CD4-positive, alpha-beta memory T cell (primary cell): ENCODE measurements at regions of chr22 and their contacts with region 1.

Region 1: DNA sequence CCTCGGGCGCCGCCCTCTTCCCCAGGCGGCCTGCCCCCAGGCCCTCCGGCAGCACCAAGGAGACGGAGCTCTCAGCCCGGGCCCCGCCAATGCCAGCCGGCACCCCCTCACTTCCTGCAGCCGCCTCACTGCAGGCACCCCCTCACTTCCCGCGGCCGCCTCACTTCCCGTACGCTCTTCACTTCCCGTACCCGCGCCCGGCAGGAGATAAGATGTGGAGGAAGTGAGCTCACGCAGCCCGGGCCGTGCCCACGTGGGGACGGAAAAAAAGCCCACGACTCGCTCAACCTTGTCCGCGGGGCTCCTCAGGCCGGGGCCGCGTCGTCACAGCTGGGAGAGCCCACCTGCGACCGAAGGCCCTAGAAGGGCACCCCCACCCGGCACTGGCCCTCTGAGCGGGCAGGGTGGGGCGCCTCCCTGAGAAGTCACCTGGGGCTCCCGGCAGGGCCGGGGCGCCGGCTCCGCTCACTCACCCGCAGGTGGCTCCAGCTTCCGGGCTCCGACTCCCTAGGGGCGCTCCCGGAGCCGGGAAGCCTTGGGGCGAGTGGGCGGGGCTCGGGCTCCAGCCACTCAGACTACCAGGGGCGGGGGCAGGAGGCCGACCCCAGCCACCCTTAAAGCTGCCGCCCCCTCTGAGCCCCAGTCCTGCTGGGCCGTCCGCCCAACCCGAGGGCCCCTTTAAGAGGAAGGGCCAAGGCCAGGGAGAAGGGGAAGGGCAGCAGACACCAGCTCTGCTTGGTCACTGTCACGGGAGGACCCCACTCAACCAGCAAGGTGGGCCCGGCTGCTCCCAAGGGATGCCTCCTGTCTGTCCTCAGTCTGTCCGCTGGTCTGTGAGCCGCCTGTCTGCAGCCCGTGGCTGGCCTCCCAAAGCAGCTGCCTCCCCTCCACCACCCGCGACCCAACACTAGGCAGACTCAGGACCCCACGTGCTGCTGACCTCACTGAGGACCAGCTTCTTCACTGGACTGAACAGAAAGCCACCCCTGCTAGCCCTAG is 31.4 kb downstream of the PISD start:
- DNase-seq: peak; percentile 88 to 94 (median 89)
- H3K4me3 ChIP-seq: peak overlapping the region; percentile 29 to 69
- H3K4me3 Mint-ChIP-seq: peak overlapping the region; percentile 86 to 89 (median 88)
- H3K27ac ChIP-seq: peak overlapping the region; percentile 86
- H3K27ac Mint-ChIP-seq: peak overlapping the region; percentile 88 to 96 (median 94)
- H3K4me1 ChIP-seq: peaks cover 56% of the 10 kb centered on the region
- H3K4me1 Mint-ChIP-seq: peaks cover 20 to 66% (median 39%) of the 10 kb centered on the region in 4 donors
- H3K27me3 ChIP-seq: no peaks in the 10 kb centered on the region
- H3K27me3 Mint-ChIP-seq: no peaks in the 10 kb centered on the region

Region 2: GRCh38 chr22:30763815-30764686 is 866.6 kb before region 1 on chr22:
- CTCF ChIA-PET with region 1: no interaction called
- POLR2A ChIA-PET with region 1: no interaction called
- intact Hi-C with region 1: loop called (anchors 10 kb)
- DNase-seq: peak; percentile 52 to 67 (median 57)
- H3K4me3 ChIP-seq: no peak overlapping the region
- H3K4me3 Mint-ChIP-seq: no peak overlapping the region
- H3K27ac ChIP-seq: no peak overlapping the region
- H3K27ac Mint-ChIP-seq: no peak overlapping the region
- H3K4me1 ChIP-seq: no peaks in the 10 kb centered on the region
- H3K4me1 Mint-ChIP-seq: no peaks in the 10 kb centered on the region
- H3K27me3 ChIP-seq: no peaks in the 10 kb centered on the region
- H3K27me3 Mint-ChIP-seq: no peaks in the 10 kb centered on the region

Region 3: GRCh38 chr22:31218565-31219262 is 411.9 kb before region 1 on chr22:
- CTCF ChIA-PET with region 1: no interaction called
- POLR2A ChIA-PET with region 1: no interaction called
- intact Hi-C with region 1: no loop called
- DNase-seq: no peak
- H3K4me3 ChIP-seq: no peak overlapping the region
- H3K4me3 Mint-ChIP-seq: no peak overlapping the region
- H3K27ac ChIP-seq: no peak overlapping the region
- H3K27ac Mint-ChIP-seq: peak overlapping the region; percentile 59 to 88 (median 81)
- H3K4me1 ChIP-seq: peaks cover 47% of the 10 kb centered on the region
- H3K4me1 Mint-ChIP-seq: peaks cover 42 to 75% (median 53%) of the 10 kb centered on the region in 4 donors
- H3K27me3 ChIP-seq: no peaks in the 10 kb centered on the region
- H3K27me3 Mint-ChIP-seq: no peaks in the 10 kb centered on the region

Region 4: DNA sequence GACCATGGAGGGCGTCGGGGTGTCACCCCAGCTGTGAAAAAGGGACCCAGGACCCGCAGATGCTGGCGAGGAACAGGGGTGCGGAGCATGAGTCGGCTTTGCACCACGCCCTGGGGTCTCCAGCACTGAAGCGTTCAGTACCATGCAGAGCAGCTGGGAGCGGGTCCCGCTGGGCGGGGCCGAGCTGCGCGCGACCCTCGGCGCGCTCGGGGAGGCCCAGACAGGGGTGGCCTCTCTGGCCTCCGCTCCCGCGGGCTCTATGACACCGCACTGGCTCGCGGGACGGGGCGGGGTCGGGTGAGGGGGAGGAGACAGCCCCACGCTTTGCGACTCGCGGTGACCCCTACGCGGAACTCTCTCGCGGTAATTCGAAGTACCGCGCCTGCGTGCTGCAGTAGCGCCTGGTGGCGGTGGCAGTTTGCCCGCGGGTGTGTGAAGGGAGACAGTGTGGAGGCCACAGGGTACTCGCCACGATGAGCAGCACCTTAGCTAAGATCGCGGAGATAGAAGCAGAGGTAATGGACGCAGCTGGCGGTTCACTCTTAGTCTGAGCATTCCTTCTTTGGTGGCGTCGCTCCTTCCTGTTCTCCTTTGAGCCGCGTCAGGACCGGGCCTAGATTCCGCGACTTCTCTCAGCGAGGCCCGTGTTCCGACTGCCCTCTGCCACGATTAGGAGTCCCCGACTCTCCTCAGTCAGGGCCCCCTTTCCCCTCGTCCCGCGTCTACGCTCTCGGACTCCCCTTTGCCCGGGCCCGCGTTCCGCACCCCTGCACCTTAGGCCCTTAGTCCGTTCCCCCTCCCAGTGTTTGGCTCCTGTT is 231.2 kb before region 1 on chr22 and contains the start of gene DRG1:
- CTCF ChIA-PET with region 1: no interaction called
- POLR2A ChIA-PET with region 1: interaction called, 5 read pairs
- intact Hi-C with region 1: loop called (anchors 1 kb)
- DNase-seq: peak; percentile 93 to 95 (median 94)
- H3K4me3 ChIP-seq: peak within 1 kb of the TSS; percentile 87 to 97
- H3K4me3 Mint-ChIP-seq: peak within 1 kb of the TSS; percentile 95 to 97 (median 96)
- H3K27ac ChIP-seq: peak within 1 kb of the TSS; percentile 92
- H3K27ac Mint-ChIP-seq: peak within 1 kb of the TSS; percentile 90 to 98 (median 96)
- H3K4me1 ChIP-seq: peaks cover 26% of the 10 kb centered on the region
- H3K4me1 Mint-ChIP-seq: peaks cover 16 to 24% (median 20%) of the 10 kb centered on the region in 4 donors
- H3K27me3 ChIP-seq: no peaks in the 10 kb centered on the region
- H3K27me3 Mint-ChIP-seq: peaks cover under 1% of the 10 kb centered on the region in 2 donors
- total RNA-seq, gene DRG1: 80.3 to 82.5 TPM

Region 5: GRCh38 chr22:31451709-31452571 is 178.7 kb before region 1 on chr22:
- CTCF ChIA-PET with region 1: interaction called, 15 read pairs
- POLR2A ChIA-PET with region 1: interaction called, 10 read pairs
- intact Hi-C with region 1: loop called (anchors 1 kb)
- DNase-seq: peak in 4 of 5 donors; percentile 16 to 22 (median 18)
- H3K4me3 ChIP-seq: no peak overlapping the region
- H3K4me3 Mint-ChIP-seq: no peak overlapping the region
- H3K27ac ChIP-seq: no peak overlapping the region
- H3K27ac Mint-ChIP-seq: peak overlapping the region in 4 of 7 donors; percentile 1 to 49 (median 28)
- H3K4me1 ChIP-seq: no peaks in the 10 kb centered on the region
- H3K4me1 Mint-ChIP-seq: no peaks in the 10 kb centered on the region
- H3K27me3 ChIP-seq: no peaks in the 10 kb centered on the region
- H3K27me3 Mint-ChIP-seq: no peaks in the 10 kb centered on the region

Region 6: GRCh38 chr22:31496007-31496734 is 134.5 kb before region 1 on chr22 and contains the start of gene SFI1:
- CTCF ChIA-PET with region 1: no interaction called
- POLR2A ChIA-PET with region 1: interaction called, 7 read pairs
- intact Hi-C with region 1: loop called (anchors 1 kb)
- DNase-seq: peak; percentile 96 to 97 (median 96)
- H3K4me3 ChIP-seq: peak within 1 kb of the TSS; percentile 93 to 96
- H3K4me3 Mint-ChIP-seq: peak within 1 kb of the TSS; percentile 87 to 98 (median 91)
- H3K27ac ChIP-seq: peak within 1 kb of the TSS; percentile 89
- H3K27ac Mint-ChIP-seq: peak within 1 kb of the TSS; percentile 94 to 98 (median 97)
- H3K4me1 ChIP-seq: peaks cover 60% of the 10 kb centered on the region
- H3K4me1 Mint-ChIP-seq: peaks cover 23 to 63% (median 32%) of the 10 kb centered on the region in 4 donors
- H3K27me3 ChIP-seq: no peaks in the 10 kb centered on the region
- H3K27me3 Mint-ChIP-seq: no peaks in the 10 kb centered on the region
- total RNA-seq, gene SFI1: 323 to 333 TPM

Region 7: DNA sequence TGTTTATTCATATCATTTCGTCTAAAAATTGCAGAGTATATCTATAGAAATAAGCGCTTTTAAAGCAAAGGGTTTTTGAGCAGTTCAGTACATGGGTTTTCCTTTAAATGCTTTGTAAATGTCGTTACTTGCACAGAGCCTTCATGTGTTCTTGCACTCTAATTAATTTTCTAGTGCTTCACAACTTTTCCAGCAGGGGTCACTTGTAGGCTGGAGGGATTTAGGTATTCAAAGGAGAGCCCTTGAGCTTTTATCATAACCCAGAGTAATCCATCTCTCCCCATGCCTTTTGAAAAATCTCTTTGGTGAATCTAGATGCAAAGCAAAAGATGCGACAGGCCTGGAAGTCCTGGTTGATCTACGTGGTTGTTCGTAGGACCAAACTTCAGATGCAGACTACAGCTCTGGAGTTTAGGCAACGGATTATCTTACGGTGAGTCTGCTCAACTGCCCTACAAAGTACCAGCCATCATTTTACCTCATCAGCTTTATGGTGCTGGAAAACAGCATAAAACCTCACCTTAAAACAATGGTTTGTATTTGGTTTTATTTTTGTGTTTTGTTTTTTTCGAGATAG is 73.9 kb before region 1 on chr22:
- CTCF ChIA-PET with region 1: interaction called, 65 read pairs
- POLR2A ChIA-PET with region 1: interaction called, 4 read pairs
- intact Hi-C with region 1: loop called (anchors 2 kb)
- DNase-seq: peak in 4 of 5 donors; percentile 21 to 30 (median 23)
- H3K4me3 ChIP-seq: no peak overlapping the region
- H3K4me3 Mint-ChIP-seq: no peak overlapping the region
- H3K27ac ChIP-seq: no peak overlapping the region
- H3K27ac Mint-ChIP-seq: peak overlapping the region in 3 of 7 donors; percentile 71 to 80 (median 75)
- H3K4me1 ChIP-seq: peaks cover 14% of the 10 kb centered on the region
- H3K4me1 Mint-ChIP-seq: peaks cover 12 to 24% (median 18%) of the 10 kb centered on the region in 4 donors
- H3K27me3 ChIP-seq: no peaks in the 10 kb centered on the region
- H3K27me3 Mint-ChIP-seq: no peaks in the 10 kb centered on the region

Region 8: DNA sequence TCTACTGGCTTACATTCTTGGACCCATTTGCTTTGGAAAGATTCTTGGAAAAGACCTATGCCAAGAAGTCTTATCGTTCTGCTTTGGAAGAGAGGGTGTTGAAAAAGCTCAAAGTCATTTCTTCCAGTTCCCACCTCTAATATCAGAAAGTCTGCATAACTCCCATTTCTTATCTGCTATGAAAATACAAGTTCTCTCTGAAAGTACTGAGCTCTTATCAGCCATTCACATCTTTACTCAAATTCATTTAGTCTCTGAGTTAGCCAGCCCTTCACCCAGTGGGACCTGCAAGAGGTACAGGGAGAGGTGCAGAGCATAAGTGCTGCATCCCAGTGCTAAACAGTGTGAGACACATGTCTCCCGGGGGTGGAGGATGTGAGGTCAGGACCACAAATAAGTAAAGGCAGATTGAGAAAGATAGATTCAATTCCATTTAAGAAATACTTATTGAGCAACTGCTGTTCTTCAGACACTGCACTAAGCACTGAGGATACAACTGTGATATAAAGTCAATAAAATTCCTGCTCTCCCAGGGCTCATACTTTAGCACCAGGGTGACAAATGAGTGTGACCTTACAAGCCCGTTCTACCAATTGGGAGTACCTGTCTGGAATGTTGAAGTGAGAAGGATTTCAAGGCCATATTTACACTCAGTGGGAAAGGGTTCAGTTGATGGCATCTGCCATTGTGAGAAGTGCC is 45.3 kb before region 1 on chr22:
- CTCF ChIA-PET with region 1: interaction called, 6 read pairs
- POLR2A ChIA-PET with region 1: interaction called, 3 read pairs
- intact Hi-C with region 1: loop called (anchors 5 kb)
- DNase-seq: peak in 2 of 5 donors; percentile 6 to 8
- H3K4me3 ChIP-seq: peak overlapping the region in 1 of 2 donors; percentile 19
- H3K4me3 Mint-ChIP-seq: peak overlapping the region in 7 of 8 donors; percentile 17 to 81 (median 67)
- H3K27ac ChIP-seq: peak overlapping the region; percentile 39
- H3K27ac Mint-ChIP-seq: peak overlapping the region; percentile 73 to 94 (median 87)
- H3K4me1 ChIP-seq: peaks cover 56% of the 10 kb centered on the region
- H3K4me1 Mint-ChIP-seq: peaks cover 33 to 47% (median 42%) of the 10 kb centered on the region in 4 donors
- H3K27me3 ChIP-seq: no peaks in the 10 kb centered on the region
- H3K27me3 Mint-ChIP-seq: no peaks in the 10 kb centered on the region

Region 9: DNA sequence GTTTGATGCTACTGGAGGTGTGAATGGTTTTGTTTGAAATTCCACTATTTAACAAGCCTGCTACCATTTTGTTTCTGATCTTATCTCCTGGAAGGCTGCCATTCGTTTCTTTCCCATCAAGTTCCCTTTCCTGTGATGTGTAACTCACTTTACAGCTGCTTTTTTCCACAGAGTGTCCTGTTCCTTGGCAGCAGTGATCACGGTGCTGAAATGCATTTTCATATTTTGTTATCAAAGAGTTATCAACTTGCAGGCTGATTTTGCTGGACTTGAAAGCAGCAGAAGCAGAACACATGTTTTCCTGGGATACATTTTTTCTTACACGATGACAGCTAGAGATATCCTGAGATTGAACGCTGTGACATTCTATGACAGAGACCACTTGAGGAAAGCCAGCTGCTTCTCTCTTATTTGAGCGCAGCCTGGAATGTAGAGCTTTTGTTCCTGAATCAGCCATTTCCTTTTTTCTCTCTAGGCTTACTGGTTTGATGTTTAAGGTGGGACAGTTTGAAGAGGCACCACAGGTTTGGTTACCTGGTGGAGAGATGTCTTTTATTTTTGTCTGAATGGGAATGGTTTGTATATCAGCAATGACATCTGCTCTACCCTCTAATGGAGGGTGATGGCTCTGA is 84.6 kb after region 1 on chr22:
- CTCF ChIA-PET with region 1: no interaction called
- POLR2A ChIA-PET with region 1: no interaction called
- intact Hi-C with region 1: no loop called
- DNase-seq: no peak
- H3K4me3 ChIP-seq: no peak overlapping the region
- H3K4me3 Mint-ChIP-seq: no peak overlapping the region
- H3K27ac ChIP-seq: no peak overlapping the region
- H3K27ac Mint-ChIP-seq: no peak overlapping the region
- H3K4me1 ChIP-seq: no peaks in the 10 kb centered on the region
- H3K4me1 Mint-ChIP-seq: peaks cover 0 to 5% (median 2%) of the 10 kb centered on the region in 4 donors
- H3K27me3 ChIP-seq: no peaks in the 10 kb centered on the region
- H3K27me3 Mint-ChIP-seq: no peaks in the 10 kb centered on the region

Region 10: DNA sequence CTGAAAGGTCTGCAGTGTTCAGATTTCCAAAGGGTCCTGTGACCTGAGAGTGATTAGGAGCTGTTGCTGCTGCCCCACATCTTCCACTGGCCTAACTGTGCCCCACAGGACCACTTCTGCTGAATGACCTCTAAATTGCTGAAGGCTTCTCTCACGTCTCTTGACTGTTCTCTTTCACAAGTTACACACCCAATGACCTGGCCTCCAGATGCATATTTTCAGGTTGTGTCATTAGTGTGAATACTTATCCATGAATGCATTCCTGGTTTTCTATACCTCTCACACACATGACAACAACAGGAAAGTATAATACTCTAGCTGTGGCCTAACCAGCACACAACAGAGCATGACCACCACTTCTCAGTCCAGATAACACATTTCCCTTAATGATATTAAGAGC is 103.9 kb after region 1 on chr22:
- CTCF ChIA-PET with region 1: no interaction called
- POLR2A ChIA-PET with region 1: no interaction called
- intact Hi-C with region 1: no loop called
- DNase-seq: no peak
- H3K4me3 ChIP-seq: no peak overlapping the region
- H3K4me3 Mint-ChIP-seq: no peak overlapping the region
- H3K27ac ChIP-seq: no peak overlapping the region
- H3K27ac Mint-ChIP-seq: peak overlapping the region in 1 of 7 donors; percentile 42
- H3K4me1 ChIP-seq: peaks cover 8% of the 10 kb centered on the region
- H3K4me1 Mint-ChIP-seq: peaks cover 22 to 36% (median 28%) of the 10 kb centered on the region in 4 donors
- H3K27me3 ChIP-seq: no peaks in the 10 kb centered on the region
- H3K27me3 Mint-ChIP-seq: no peaks in the 10 kb centered on the region